Naive thymus-derived CD4-positive, alpha-beta T cell (primary cell): ENCODE measurements at regions of chr5 and their contacts with region 1.

Region 1: DNA sequence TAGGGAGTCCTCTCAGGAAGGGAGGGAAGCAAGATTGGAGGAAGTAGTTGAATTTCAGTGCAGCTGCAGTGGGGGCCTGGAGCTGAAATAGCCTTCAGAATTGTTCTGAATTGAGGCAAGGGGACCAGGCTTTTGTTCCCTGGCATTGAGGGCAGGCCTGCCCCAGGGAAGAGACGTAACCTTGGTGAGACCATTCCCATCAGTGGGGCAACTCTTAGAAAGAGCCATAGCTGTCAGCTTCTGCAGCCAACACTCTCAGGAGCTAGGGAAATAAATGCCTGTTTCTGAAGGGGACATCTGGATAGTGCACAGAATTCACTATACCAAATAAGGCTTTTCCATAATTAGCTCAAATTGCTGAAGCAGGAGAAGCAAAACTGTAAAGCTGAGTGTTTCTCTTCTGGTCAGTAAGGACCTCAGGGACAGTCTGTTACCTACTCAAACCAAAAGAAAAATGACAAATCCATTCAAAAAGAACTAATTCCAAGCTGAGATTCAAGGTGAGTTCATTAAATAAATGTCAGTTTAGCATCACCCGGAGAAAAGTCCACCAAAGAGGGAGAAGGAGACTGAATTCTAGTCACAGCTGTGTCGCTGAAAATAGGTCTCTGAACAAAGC is 44.0 kb downstream of the LYRM7 start:
- DNase-seq: no peak
- ATAC-seq: no peak
- H3K4me3 ChIP-seq: no peak overlapping the region
- H3K4me3 Mint-ChIP-seq: peak overlapping the region in 4 of 10 donors; percentile 14 to 49 (median 34)
- H3K27ac ChIP-seq: no peak overlapping the region
- H3K27ac Mint-ChIP-seq: peak overlapping the region in 4 of 9 donors; percentile 52 to 77 (median 54)
- H3K4me1 ChIP-seq: peaks cover 12 to 32% of the 10 kb centered on the region in 2 donors
- H3K4me1 Mint-ChIP-seq: peaks cover 26 to 59% (median 48%) of the 10 kb centered on the region in 7 donors
- H3K27me3 ChIP-seq: no peaks in the 10 kb centered on the region
- H3K27me3 Mint-ChIP-seq: no peaks in the 10 kb centered on the region

Region 2: GRCh38 chr5:131258733-131259132 is 44.0 kb after region 1 on chr5:
- CTCF ChIA-PET with region 1: interaction called, 4 read pairs
- POLR2A ChIA-PET with region 1: interaction called, 26 read pairs
- intact Hi-C with region 1: loop called (anchors 1 kb)
- DNase-seq: no peak
- ATAC-seq: no peak
- H3K4me3 ChIP-seq: peak overlapping the region; percentile 20
- H3K4me3 Mint-ChIP-seq: peak overlapping the region; percentile 46 to 88 (median 80)
- H3K27ac ChIP-seq: peak overlapping the region; percentile 61
- H3K27ac Mint-ChIP-seq: peak overlapping the region; percentile 85 to 96 (median 93)
- H3K4me1 ChIP-seq: peaks cover 62 to 63% of the 10 kb centered on the region in 2 donors
- H3K4me1 Mint-ChIP-seq: peaks cover 52 to 91% (median 75%) of the 10 kb centered on the region in 7 donors
- H3K27me3 ChIP-seq: no peaks in the 10 kb centered on the region
- H3K27me3 Mint-ChIP-seq: no peaks in the 10 kb centered on the region

Region 3: GRCh38 chr5:131505237-131505908 is 290.7 kb after region 1 on chr5:
- CTCF ChIA-PET with region 1: no interaction called
- POLR2A ChIA-PET with region 1: no interaction called
- intact Hi-C with region 1: no loop called
- DNase-seq: no peak
- ATAC-seq: no peak
- H3K4me3 ChIP-seq: no peak overlapping the region
- H3K4me3 Mint-ChIP-seq: no peak overlapping the region
- H3K27ac ChIP-seq: peak overlapping the region; percentile 20
- H3K27ac Mint-ChIP-seq: peak overlapping the region in 5 of 9 donors; percentile 20 to 86 (median 44)
- H3K4me1 ChIP-seq: no peaks in the 10 kb centered on the region
- H3K4me1 Mint-ChIP-seq: peaks cover 11 to 68% (median 44%) of the 10 kb centered on the region in 7 donors
- H3K27me3 ChIP-seq: no peaks in the 10 kb centered on the region
- H3K27me3 Mint-ChIP-seq: no peaks in the 10 kb centered on the region